T-cell (primary cell): ENCODE measurements at regions of chr19 and their contacts with region 1.

Region 1: GRCh38 chr19:43463381-43464136 is 1.8 kb downstream of the LYPD3 start:
- DNase-seq: peak; percentile 98 to 100 (median 100)
- ATAC-seq: peak; percentile 81 to 89 (median 88)
- H3K4me3 ChIP-seq: peak overlapping the region; percentile 67 to 96
- H3K4me3 Mint-ChIP-seq: peak overlapping the region; percentile 88 to 95 (median 90)
- H3K27ac ChIP-seq: peak overlapping the region; percentile 90
- H3K27ac Mint-ChIP-seq: peak overlapping the region; percentile 95 to 97
- H3K4me1 ChIP-seq: peaks cover 18 to 54% of the 10 kb centered on the region in 2 experiments
- H3K4me1 Mint-ChIP-seq: peaks cover 56 to 59% (median 57%) of the 10 kb centered on the region in 3 donors
- H3K27me3 ChIP-seq: no peaks in the 10 kb centered on the region
- H3K27me3 Mint-ChIP-seq: no peaks in the 10 kb centered on the region

Region 2: DNA sequence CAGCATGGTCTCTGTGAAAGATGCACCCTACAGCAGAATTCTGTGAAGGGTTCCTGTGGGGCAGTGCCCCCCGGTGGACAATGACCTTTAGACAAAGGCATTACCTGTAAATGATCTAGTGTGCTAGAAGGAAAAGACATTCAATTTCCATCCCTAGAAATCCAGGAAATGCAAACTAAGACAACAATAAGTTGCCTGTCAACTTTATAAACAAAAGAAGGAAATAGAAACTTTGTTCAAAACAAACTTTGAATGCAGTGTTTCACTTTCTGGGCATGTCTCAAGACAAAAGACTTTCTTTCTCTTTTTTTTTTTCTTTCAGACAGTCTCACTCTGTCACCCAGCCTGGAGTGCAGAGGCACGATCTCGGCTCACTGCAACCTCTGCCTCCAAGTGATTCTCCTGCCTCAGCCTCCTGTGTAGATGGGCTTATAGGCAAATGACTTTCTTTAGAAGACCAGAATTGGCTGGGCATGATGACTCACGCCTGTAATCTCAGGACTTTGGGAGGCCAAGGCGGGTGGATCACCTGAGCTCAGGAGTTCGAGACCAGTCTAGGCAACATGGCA is 33.3 kb before region 1 on chr19:
- CTCF ChIA-PET with region 1: interaction called in 1 of 2 experiments, 11 read pairs
- POLR2A ChIA-PET with region 1: no interaction called
- DNase-seq: peak in 12 of 35 experiments; percentile 9 to 57 (median 24)
- ATAC-seq: peak in 1 of 4 experiments; percentile 61
- H3K4me3 ChIP-seq: no peak overlapping the region
- H3K4me3 Mint-ChIP-seq: no peak overlapping the region
- H3K27ac ChIP-seq: no peak overlapping the region
- H3K27ac Mint-ChIP-seq: peak overlapping the region in 1 of 2 donors; percentile 82
- H3K4me1 ChIP-seq: peaks cover 7 to 13% of the 10 kb centered on the region in 2 experiments
- H3K4me1 Mint-ChIP-seq: peaks cover 19 to 36% (median 28%) of the 10 kb centered on the region in 3 donors
- H3K27me3 ChIP-seq: peaks cover 0 to 5% of the 10 kb centered on the region in 2 experiments
- H3K27me3 Mint-ChIP-seq: no peaks in the 10 kb centered on the region

Region 3: GRCh38 chr19:43438291-43439096 is 25.1 kb before region 1 on chr19:
- CTCF ChIA-PET with region 1: interaction called in 1 of 2 experiments, 21 read pairs
- POLR2A ChIA-PET with region 1: interaction called in 1 of 2 experiments, 7 read pairs
- DNase-seq: peak in 3 of 35 experiments; percentile 8 to 30 (median 23)
- ATAC-seq: peak; percentile 10 to 35 (median 16)
- H3K4me3 ChIP-seq: peak overlapping the region; percentile 16 to 25
- H3K4me3 Mint-ChIP-seq: peak overlapping the region; percentile 13 to 67 (median 28)
- H3K27ac ChIP-seq: peak overlapping the region; percentile 78
- H3K27ac Mint-ChIP-seq: peak overlapping the region; percentile 93 to 97
- H3K4me1 ChIP-seq: peaks cover 28 to 36% of the 10 kb centered on the region in 2 experiments
- H3K4me1 Mint-ChIP-seq: peaks cover 58 to 69% (median 62%) of the 10 kb centered on the region in 3 donors
- H3K27me3 ChIP-seq: no peaks in the 10 kb centered on the region
- H3K27me3 Mint-ChIP-seq: no peaks in the 10 kb centered on the region

Region 4: GRCh38 chr19:43446746-43447489 is 16.6 kb before region 1 on chr19:
- CTCF ChIA-PET with region 1: interaction called, 6 to 16 read pairs
- POLR2A ChIA-PET with region 1: no interaction called
- DNase-seq: peak; percentile 58 to 90 (median 77)
- ATAC-seq: peak; percentile 88 to 94 (median 90)
- H3K4me3 ChIP-seq: no peak overlapping the region
- H3K4me3 Mint-ChIP-seq: no peak overlapping the region
- H3K27ac ChIP-seq: no peak overlapping the region
- H3K27ac Mint-ChIP-seq: peak overlapping the region in 1 of 2 donors; percentile 76
- H3K4me1 ChIP-seq: peaks cover 0 to 13% of the 10 kb centered on the region in 2 experiments
- H3K4me1 Mint-ChIP-seq: peaks cover 27 to 39% (median 39%) of the 10 kb centered on the region in 3 donors
- H3K27me3 ChIP-seq: no peaks in the 10 kb centered on the region
- H3K27me3 Mint-ChIP-seq: no peaks in the 10 kb centered on the region

Region 5: DNA sequence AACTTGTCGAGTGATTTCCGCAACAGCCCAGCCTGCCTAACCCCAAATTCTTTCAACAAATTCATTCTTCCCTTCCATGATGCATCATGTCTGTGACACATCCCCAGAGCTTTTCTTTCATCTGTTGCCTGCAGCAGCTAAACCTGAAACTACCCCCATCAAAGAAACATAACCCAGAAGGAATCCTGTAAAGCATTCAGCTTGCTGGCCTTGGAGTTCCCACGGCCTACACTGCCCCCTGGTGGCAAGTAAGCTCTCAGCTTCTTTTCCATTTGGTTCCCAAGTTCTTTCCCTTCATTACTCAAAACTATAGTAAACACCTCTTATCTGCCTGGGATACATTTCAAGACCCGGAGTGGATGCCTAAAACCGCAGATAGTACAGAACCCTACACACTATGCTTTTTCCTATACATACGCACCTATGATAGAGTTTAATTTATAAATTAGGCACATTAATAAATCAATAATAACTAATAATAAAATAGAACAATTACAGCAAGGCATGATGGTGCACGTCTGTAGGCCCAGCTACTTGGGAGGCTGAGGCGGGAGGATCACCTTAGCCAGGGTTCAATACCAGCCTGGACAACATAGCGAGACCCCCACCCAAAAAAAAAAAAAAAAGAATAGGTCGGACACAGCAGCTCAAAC is 56.0 kb after region 1 on chr19:
- CTCF ChIA-PET with region 1: interaction called in 1 of 2 experiments, 25 read pairs
- POLR2A ChIA-PET with region 1: interaction called in 1 of 2 experiments, 3 read pairs
- DNase-seq: peak; percentile 42 to 92 (median 73)
- ATAC-seq: peak; percentile 84 to 99 (median 86)
- H3K4me3 ChIP-seq: no peak overlapping the region
- H3K4me3 Mint-ChIP-seq: no peak overlapping the region
- H3K27ac ChIP-seq: no peak overlapping the region
- H3K27ac Mint-ChIP-seq: peak overlapping the region; percentile 26 to 65
- H3K4me1 ChIP-seq: peaks cover 5 to 9% of the 10 kb centered on the region in 2 experiments
- H3K4me1 Mint-ChIP-seq: peaks cover 12 to 18% (median 15%) of the 10 kb centered on the region in 3 donors
- H3K27me3 ChIP-seq: no peaks in the 10 kb centered on the region
- H3K27me3 Mint-ChIP-seq: no peaks in the 10 kb centered on the region

Region 6: GRCh38 chr19:43668406-43669158 is 205.0 kb after region 1 on chr19:
- CTCF ChIA-PET with region 1: interaction called in 1 of 2 experiments, 20 read pairs
- POLR2A ChIA-PET with region 1: no interaction called
- DNase-seq: peak; percentile 87 to 98 (median 95)
- ATAC-seq: peak; percentile 82 to 87 (median 85)
- H3K4me3 ChIP-seq: peak overlapping the region; percentile 58 to 64
- H3K4me3 Mint-ChIP-seq: peak overlapping the region; percentile 82 to 87 (median 84)
- H3K27ac ChIP-seq: peak overlapping the region; percentile 22
- H3K27ac Mint-ChIP-seq: peak overlapping the region; percentile 76 to 79
- H3K4me1 ChIP-seq: peaks cover 26 to 53% of the 10 kb centered on the region in 2 experiments
- H3K4me1 Mint-ChIP-seq: peaks cover 42 to 50% (median 49%) of the 10 kb centered on the region in 3 donors
- H3K27me3 ChIP-seq: peaks cover 0 to 6% of the 10 kb centered on the region in 2 experiments
- H3K27me3 Mint-ChIP-seq: no peaks in the 10 kb centered on the region

Region 7: DNA sequence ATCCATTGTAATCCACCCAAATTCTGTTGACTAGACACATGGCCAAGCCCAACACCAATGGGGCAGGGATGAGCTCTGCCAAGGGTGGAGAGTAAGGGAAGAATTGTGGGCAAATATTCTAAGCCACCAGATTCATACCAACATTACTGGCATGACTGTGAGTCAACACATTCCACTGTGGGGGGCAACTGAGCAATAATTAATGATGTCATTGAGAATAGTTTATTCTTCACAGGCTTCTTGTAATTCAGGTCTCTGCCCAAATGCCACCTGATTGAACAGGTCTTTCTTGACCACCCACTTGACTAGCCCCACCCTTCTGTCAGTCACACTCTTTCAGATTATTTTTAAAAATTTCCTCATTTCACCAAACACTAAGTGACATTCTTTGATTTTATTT is 392.1 kb after region 1 on chr19:
- CTCF ChIA-PET with region 1: no interaction called
- POLR2A ChIA-PET with region 1: no interaction called
- DNase-seq: no peak
- ATAC-seq: no peak
- H3K4me3 ChIP-seq: no peak overlapping the region
- H3K4me3 Mint-ChIP-seq: no peak overlapping the region
- H3K27ac ChIP-seq: no peak overlapping the region
- H3K27ac Mint-ChIP-seq: no peak overlapping the region
- H3K4me1 ChIP-seq: no peaks in the 10 kb centered on the region
- H3K4me1 Mint-ChIP-seq: no peaks in the 10 kb centered on the region
- H3K27me3 ChIP-seq: no peaks in the 10 kb centered on the region
- H3K27me3 Mint-ChIP-seq: no peaks in the 10 kb centered on the region